Endothelial cell of umbilical vein (primary cell): ENCODE measurements at regions of chr3 and their contacts with region 1.

Region 1: GRCh38 chr3:29202378-29202777 is 78.5 kb upstream of the RBMS3 start:
- DNase-seq: peak; percentile 59
- H3K4me3 ChIP-seq: no peak overlapping the region
- H3K27ac ChIP-seq: peak overlapping the region; percentile 37
- H3K4me1 ChIP-seq: peaks cover 17% of the 10 kb centered on the region
- H3K27me3 ChIP-seq: no peaks in the 10 kb centered on the region
- CTCF ChIP-seq: no peak
- POLR2A ChIP-seq: no peak

Region 2: GRCh38 chr3:29164825-29165224 is 37.6 kb before region 1 on chr3:
- CTCF ChIA-PET with region 1: no interaction called
- POLR2A ChIA-PET with region 1: no interaction called
- dilution Hi-C with region 1: no loop called
- intact Hi-C with region 1: no loop called
- DNase-seq: no peak
- H3K4me3 ChIP-seq: no peak overlapping the region
- H3K27ac ChIP-seq: no peak overlapping the region
- H3K4me1 ChIP-seq: no peaks in the 10 kb centered on the region
- H3K27me3 ChIP-seq: no peaks in the 10 kb centered on the region
- CTCF ChIP-seq: no peak
- POLR2A ChIP-seq: no peak

Region 3: GRCh38 chr3:29240248-29240647 is 37.9 kb after region 1 on chr3:
- CTCF ChIA-PET with region 1: no interaction called
- POLR2A ChIA-PET with region 1: no interaction called
- dilution Hi-C with region 1: no loop called
- intact Hi-C with region 1: loop called (anchors 5 kb)
- DNase-seq: peak; percentile 86
- H3K4me3 ChIP-seq: no peak overlapping the region
- H3K27ac ChIP-seq: peak overlapping the region; percentile 70
- H3K4me1 ChIP-seq: peaks cover 17% of the 10 kb centered on the region
- H3K27me3 ChIP-seq: no peaks in the 10 kb centered on the region
- CTCF ChIP-seq: no peak
- POLR2A ChIP-seq: no peak